GM10248 (cell line): ENCODE measurements at regions of chr10 and their contacts with region 1.

Region 1: DNA sequence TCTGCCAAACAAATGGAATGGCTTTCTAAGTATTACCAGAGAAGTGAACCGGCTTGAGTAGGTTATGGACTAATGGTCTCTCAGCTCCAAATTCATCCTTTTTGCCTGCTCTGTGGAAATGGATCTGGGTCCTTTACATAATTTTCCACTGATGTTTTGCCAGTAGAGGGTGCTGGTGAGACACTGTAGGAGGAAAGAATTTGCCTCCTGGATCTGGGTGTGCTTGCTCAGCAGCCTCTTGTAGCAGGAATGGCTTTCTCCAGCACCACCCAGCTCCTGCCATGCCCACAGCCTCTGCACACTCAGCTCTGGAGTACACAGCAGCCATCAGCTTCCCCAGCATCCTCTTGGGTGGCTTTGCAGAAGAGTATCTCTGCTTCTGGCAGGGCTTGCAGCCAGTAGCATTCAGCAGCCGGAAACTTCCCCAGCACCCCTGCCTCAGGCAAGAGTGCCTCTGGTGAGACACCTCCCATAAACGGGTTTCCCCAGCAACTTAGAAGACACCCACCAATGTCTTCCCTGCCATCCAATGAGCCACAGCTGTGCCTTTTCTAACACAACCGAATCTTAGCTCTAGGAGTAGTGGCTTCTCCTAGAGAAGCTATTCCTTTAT is 235.0 kb upstream of the PLPP4 start:
- DNase-seq: peak; percentile 50
- CTCF ChIP-seq: peak; percentile 63

Region 2: DNA sequence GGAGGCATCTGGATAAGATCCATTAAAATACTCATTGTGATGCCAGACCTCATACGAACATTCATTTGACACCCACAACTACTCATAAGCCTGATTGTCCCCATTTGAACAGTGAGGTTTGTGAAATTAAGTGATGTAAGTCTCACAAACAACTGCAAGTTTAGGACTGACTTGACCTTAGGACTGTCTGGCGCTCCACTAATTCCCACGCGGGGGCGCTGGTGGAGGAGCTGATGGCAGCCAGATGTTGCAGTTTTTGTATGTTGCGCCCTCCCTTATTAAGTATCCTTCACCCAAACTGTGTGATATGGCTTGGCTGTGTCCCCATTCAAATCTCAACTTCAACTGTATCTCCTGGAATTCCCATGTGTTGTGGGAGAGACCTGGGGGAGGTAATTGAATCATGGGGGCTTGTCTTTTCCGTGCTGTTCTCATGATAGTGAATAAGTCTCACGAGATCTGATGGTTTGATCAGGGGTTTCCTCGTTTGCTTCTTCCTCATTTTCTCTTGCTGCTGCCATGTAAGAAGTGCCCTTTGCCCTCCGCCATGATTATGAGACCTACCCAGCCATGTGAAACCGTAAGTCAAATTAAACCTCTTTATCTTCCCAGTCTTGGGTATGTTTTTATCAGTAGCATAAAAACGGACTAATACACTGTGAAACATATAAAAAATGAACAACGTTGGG is 605.0 kb before region 1 on chr10:
- CTCF ChIA-PET with region 1: no interaction called
- POLR2A ChIA-PET with region 1: no interaction called
- DNase-seq: no peak
- CTCF ChIP-seq: no peak

Region 3: GRCh38 chr10:119997429-119997828 is 224.6 kb before region 1 on chr10:
- CTCF ChIA-PET with region 1: no interaction called
- POLR2A ChIA-PET with region 1: no interaction called
- DNase-seq: no peak
- CTCF ChIP-seq: no peak

Region 4: DNA sequence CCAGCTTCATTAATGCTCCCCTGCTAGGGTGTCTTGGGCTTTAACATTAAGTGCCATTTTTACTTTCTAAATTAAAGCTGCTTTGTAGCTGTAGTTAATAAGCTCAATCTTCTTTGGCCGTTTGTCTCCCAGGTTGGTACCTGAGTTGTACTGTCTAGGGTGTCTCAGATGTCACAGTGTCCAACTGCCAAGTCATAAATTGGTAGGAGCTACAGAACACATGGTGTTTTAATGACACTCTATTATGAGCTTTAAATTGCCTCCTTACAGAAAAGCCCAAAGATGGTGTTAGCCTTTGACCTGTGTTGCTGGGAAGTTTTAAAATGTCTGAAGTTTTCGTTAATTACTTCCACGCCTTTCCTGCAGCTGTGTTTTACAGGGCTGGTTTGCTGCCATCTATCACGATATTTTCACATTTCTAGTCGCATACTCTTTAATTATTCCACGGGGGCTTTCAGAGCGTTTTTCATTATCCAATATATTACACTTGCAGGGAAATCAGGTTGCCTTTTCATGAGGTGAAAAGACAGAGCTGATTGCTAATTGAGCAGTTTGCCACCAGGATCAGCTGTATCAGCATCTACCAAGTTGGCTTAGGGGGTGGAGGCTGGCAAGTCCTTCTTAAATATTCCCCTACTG is 12.7 kb before region 1 on chr10:
- CTCF ChIA-PET with region 1: interaction called, 15 read pairs
- POLR2A ChIA-PET with region 1: no interaction called
- DNase-seq: no peak
- CTCF ChIP-seq: no peak